ENCODE measurements at regions of chr4 and their contacts with region 1.

Region 1: GRCh38 chr4:69773484-69773883 is 13.1 kb upstream of the SULT1B1 start:
- DNase-seq: peak; percentile 15
- H3K4me3 Mint-ChIP-seq: no peak overlapping the region
- H3K27ac Mint-ChIP-seq: no peak overlapping the region
- H3K4me1 Mint-ChIP-seq: peaks cover 28% of the 10 kb centered on the region
- H3K27me3 Mint-ChIP-seq: no peaks in the 10 kb centered on the region
- CTCF ChIP-seq: no peak

Region 2: GRCh38 chr4:69713593-69713992 is 59.9 kb before region 1 on chr4:
- CTCF ChIA-PET with region 1: no interaction called
- intact Hi-C with region 1: loop called (anchors 10 kb)
- DNase-seq: no peak
- H3K4me3 Mint-ChIP-seq: no peak overlapping the region
- H3K27ac Mint-ChIP-seq: no peak overlapping the region
- H3K4me1 Mint-ChIP-seq: peaks cover 8% of the 10 kb centered on the region
- H3K27me3 Mint-ChIP-seq: no peaks in the 10 kb centered on the region
- CTCF ChIP-seq: no peak

Region 3: GRCh38 chr4:69881173-69881773 is 107.8 kb after region 1 on chr4:
- CTCF ChIA-PET with region 1: no interaction called
- intact Hi-C with region 1: no loop called
- DNase-seq: peak; percentile 6
- H3K4me3 Mint-ChIP-seq: no peak overlapping the region
- H3K27ac Mint-ChIP-seq: no peak overlapping the region
- H3K4me1 Mint-ChIP-seq: peaks cover 22% of the 10 kb centered on the region
- H3K27me3 Mint-ChIP-seq: no peaks in the 10 kb centered on the region
- CTCF ChIP-seq: peak; percentile 61